ENCODE measurements at regions of chr2 and their contacts with region 1.

Region 1: DNA sequence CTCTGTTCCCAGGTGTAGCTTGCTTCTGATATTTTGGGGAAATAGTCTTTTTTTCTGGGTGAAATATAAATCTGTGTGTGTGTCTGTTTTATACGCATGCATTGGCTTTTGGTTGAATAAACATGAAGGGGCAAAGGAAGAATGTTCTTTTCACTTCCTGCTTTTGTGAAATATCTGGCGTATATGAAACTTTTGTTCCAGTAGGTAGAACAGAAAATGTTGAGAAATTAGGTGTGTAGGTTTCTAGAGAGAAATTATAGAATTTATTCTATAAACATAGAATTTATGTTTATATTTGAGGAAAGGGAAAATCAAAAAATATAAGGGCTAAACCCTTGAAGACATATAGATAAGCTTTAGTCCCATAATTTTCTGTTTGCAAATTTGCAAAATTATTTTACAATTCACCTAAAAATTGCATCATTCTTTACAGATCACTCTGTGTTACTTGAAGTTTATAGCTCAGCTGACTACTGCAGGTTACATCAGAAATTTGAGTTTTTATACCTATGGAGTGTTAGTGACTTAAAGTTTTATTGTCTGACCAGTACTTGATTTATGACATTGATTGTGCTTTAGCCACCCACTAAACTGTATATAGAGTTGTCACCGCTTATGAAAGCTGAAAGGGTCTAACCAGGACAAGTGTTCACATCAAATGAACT is 116.1 kb downstream of the FAM117B start:
- DNase-seq: peak; percentile 58
- ATAC-seq: peak; percentile 80
- H3K4me3 ChIP-seq: peak overlapping the region in 1 of 5 experiments; percentile 6
- H3K4me3 Mint-ChIP-seq: peak overlapping the region; percentile 67
- H3K27ac ChIP-seq: peak overlapping the region; percentile 74 to 87
- H3K27ac Mint-ChIP-seq: peak overlapping the region; percentile 85
- H3K4me1 ChIP-seq: peaks cover 14 to 19% of the 10 kb centered on the region in 2 donors
- H3K4me1 Mint-ChIP-seq: peaks cover 43% of the 10 kb centered on the region
- H3K27me3 ChIP-seq: no peaks in the 10 kb centered on the region
- H3K27me3 Mint-ChIP-seq: no peaks in the 10 kb centered on the region
- CTCF ChIP-seq: no peak

Region 2: GRCh38 chr2:202718614-202719013 is 32.3 kb before region 1 on chr2:
- CTCF ChIA-PET with region 1: no interaction called
- POLR2A ChIA-PET with region 1: no interaction called
- intact Hi-C with region 1: loop called (anchors 5 kb)
- DNase-seq: no peak
- ATAC-seq: no peak
- H3K4me3 ChIP-seq: no peak overlapping the region
- H3K4me3 Mint-ChIP-seq: no peak overlapping the region
- H3K27ac ChIP-seq: peak overlapping the region in 1 of 2 donors; percentile 4
- H3K27ac Mint-ChIP-seq: peak overlapping the region; percentile 8
- H3K4me1 ChIP-seq: peaks cover 11 to 20% of the 10 kb centered on the region in 2 donors
- H3K4me1 Mint-ChIP-seq: peaks cover 44% of the 10 kb centered on the region
- H3K27me3 ChIP-seq: no peaks in the 10 kb centered on the region
- H3K27me3 Mint-ChIP-seq: no peaks in the 10 kb centered on the region
- CTCF ChIP-seq: no peak